GM13976 (cell line): ENCODE measurements at regions of chr1 and their contacts with region 1.

Region 1: GRCh38 chr1:192808518-192809306 is at the start of gene RGS2:
- DNase-seq: peak; percentile 92
- CTCF ChIP-seq: no peak

Region 2: GRCh38 chr1:193019442-193020026 is 210.8 kb after region 1 on chr1:
- in situ Hi-C with region 1: loop called (anchors 25 kb)
- DNase-seq: peak; percentile 18
- CTCF ChIP-seq: peak; percentile 11

Region 3: GRCh38 chr1:193121616-193122593 is 313.2 kb after region 1 on chr1 and contains the start of gene CDC73:
- in situ Hi-C with region 1: loop called (anchors 25 kb)
- DNase-seq: peak; percentile 95
- CTCF ChIP-seq: peak; percentile 98